AG04450 (cell line): ENCODE measurements at regions of chr1 and their contacts with region 1.

Region 1: GRCh38 chr1:223133824-223134435 is 9.1 kb downstream of the TLR5 start:
- DNase-seq: peak; percentile 57
- H3K4me3 ChIP-seq: peak overlapping the region; percentile 46
- H3K27ac ChIP-seq: no peak overlapping the region
- H3K27me3 ChIP-seq: peaks cover 25% of the 10 kb centered on the region
- CTCF ChIP-seq: peak; percentile 98

Region 2: DNA sequence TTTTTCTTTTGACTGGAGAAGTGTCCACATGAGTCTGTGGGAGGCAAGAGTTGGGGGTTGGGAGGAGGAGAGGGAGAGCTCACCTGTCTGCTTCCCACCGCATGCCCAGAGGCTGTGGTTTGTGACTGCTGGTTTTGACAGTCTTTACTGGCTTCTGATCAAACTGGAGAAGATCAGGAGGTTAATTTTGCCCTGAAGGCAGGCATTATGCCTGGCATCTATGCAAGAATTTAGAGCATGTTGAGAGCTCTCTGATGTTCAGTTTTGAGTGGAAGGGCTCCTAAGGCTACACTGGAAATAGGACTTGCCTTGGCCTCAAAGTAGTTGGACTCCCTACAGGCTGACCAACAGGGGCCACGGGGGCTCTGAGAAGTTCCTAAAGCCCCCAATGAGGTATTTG is 92.5 kb before region 1 on chr1:
- CTCF ChIA-PET with region 1: no interaction called
- POLR2A ChIA-PET with region 1: no interaction called
- DNase-seq: no peak
- H3K4me3 ChIP-seq: no peak overlapping the region
- H3K27ac ChIP-seq: no peak overlapping the region
- H3K27me3 ChIP-seq: peaks cover 4% of the 10 kb centered on the region
- CTCF ChIP-seq: no peak

Region 3: DNA sequence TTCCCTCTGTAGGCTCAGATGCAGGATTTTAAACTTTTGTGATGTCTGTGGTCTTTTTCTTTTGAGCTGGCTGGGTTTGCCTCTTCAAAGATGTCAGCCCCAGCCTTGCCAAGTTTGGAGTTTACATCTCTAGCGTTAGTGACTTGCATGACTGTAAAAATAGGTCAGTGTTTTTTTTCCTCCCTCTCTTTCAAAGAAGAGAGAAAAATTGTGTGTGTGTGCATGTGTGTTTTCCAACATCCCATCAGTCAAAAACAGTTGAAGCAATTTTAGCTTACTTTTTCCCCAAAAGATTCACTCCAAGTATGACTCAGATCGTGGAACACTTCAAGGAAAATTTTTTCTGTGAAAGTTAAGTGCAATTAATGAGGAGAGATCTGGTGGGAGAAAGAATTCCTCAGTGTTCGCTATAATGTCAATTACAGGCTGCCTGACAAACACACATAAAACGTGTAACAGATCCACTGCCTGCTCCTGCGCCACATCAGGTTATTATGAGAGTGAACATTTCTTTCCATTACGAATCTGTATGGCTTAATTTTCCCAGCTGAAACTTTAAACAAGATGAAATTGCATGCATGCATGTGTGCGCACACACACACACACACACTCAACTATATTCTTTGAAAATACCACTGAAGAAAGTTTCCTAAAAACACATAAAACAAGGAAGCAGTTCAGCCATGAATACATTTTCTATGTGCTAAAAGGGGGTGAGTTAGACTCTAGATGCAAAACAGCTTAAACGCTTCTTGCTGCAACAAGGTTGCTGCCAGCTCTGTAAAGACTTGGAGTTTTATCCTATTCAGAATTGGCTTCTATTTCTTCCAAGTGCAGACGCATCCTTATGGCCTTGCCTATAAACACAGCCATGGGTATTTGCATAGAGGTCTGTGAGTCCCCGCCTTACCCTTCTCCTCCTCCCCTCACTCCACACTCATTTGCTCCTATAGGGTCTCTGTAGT is 46.4 kb before region 1 on chr1:
- CTCF ChIA-PET with region 1: interaction called, 22 read pairs
- POLR2A ChIA-PET with region 1: no interaction called
- DNase-seq: no peak
- H3K4me3 ChIP-seq: no peak overlapping the region
- H3K27ac ChIP-seq: no peak overlapping the region
- H3K27me3 ChIP-seq: peaks cover 35% of the 10 kb centered on the region
- CTCF ChIP-seq: no peak

Region 4: GRCh38 chr1:223123011-223123610 is 10.8 kb before region 1 on chr1:
- CTCF ChIA-PET with region 1: interaction called, 144 read pairs
- POLR2A ChIA-PET with region 1: no interaction called
- DNase-seq: no peak
- H3K4me3 ChIP-seq: no peak overlapping the region
- H3K27ac ChIP-seq: no peak overlapping the region
- H3K27me3 ChIP-seq: peaks cover 11% of the 10 kb centered on the region
- CTCF ChIP-seq: no peak

Region 5: DNA sequence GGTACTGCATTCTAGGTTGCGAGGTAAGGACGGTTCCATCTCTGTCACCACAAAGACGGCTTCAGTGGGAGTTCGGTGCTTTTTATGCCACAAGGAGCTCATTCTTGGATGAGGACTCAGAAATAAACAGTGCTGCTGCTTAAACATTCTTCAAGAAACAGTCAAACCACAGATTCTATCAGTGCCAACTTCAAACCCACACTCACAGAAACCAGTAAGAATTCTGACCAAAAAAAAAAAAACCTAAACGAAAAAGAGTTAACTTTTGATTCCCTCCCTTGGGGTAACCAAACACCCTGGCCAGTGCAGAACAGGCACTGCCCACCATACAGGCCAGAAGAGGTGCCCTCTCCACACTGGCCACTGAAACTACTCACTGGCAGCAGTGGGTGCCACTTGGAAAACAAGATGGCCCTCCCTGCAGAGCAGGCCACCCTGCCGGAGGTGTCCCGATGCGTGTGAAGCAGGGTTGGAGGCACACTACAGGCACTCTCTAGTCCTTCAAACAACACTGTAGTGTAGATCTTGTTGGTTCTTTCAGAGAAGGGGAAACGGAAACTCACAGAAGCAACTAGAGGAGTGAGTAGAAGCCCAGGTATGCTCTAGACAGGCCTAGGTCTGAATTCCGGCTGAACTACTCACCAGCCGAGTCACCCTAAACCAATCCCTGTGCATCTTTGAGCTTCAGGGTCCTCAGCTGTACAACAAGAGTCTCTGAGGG is 96.4 kb after region 1 on chr1:
- CTCF ChIA-PET with region 1: interaction called, 11 read pairs
- POLR2A ChIA-PET with region 1: interaction called, 5 read pairs
- DNase-seq: peak; percentile 71
- H3K4me3 ChIP-seq: peak overlapping the region; percentile 31
- H3K27ac ChIP-seq: peak overlapping the region; percentile 95
- H3K27me3 ChIP-seq: no peaks in the 10 kb centered on the region
- CTCF ChIP-seq: no peak

Region 6: GRCh38 chr1:223411309-223411708 is 277.4 kb after region 1 on chr1:
- CTCF ChIA-PET with region 1: interaction called, 13 read pairs
- POLR2A ChIA-PET with region 1: no interaction called
- DNase-seq: peak; percentile 65
- H3K4me3 ChIP-seq: no peak overlapping the region
- H3K27ac ChIP-seq: no peak overlapping the region
- H3K27me3 ChIP-seq: no peaks in the 10 kb centered on the region
- CTCF ChIP-seq: no peak

Region 7: GRCh38 chr1:223628233-223629125 is 494.5 kb after region 1 on chr1:
- CTCF ChIA-PET with region 1: interaction called, 16 read pairs
- POLR2A ChIA-PET with region 1: no interaction called
- DNase-seq: peak; percentile 4
- H3K4me3 ChIP-seq: no peak overlapping the region
- H3K27ac ChIP-seq: no peak overlapping the region
- H3K27me3 ChIP-seq: peaks cover 17% of the 10 kb centered on the region
- CTCF ChIP-seq: peak; percentile 49

Region 8: DNA sequence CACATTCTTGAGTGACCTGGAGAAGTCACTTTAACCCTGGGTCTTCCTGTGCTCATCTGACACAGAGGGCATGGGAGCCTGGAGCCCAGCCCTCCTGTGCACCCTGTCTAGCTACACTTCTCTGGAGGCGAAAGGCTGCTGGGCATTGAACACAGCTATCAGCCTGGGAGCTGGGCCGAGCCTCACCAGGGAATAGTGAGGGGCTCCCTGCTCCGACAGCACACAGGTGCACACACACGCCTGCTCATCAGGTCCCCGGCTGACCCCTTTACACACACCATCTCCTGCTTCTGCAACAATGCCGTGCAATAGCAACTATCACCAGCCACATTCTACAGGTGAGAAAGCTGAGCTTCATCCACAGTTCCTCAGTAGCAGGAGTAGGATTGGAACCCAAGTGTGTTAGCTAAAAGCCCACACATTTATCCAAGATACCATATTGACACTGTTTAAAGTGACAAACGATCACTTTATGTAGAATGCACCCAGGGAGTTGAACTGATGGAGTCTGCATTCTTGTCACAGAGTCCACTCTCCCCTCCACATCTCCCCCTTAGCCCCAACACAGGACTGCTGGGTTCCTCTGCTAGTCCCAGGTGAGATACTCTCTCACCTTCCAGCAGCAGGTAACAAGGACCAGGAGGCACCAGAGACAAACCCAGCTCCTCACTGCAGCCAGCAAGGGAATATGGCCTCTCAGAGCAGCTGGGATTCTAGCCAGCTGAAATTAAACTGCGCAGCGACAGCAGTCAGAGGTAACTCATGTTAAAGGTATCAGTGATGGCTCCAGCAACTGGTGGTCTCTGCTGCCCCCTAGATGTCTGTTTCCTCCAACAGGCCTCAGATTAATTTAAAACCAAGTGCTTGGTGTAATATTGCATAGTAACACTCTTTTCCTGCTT is 549.9 kb after region 1 on chr1:
- CTCF ChIA-PET with region 1: interaction called, 225 read pairs
- POLR2A ChIA-PET with region 1: no interaction called
- DNase-seq: no peak
- H3K4me3 ChIP-seq: no peak overlapping the region
- H3K27ac ChIP-seq: no peak overlapping the region
- H3K27me3 ChIP-seq: peaks cover 17% of the 10 kb centered on the region
- CTCF ChIP-seq: peak; percentile 79